OCI-LY7 (cell line): ENCODE measurements at regions of chr9 and their contacts with region 1.

Region 1: GRCh38 chr9:68949271-68950000 is 64.5 kb downstream of the PRKACG start:
- DNase-seq: peak; percentile 76
- H3K4me3 ChIP-seq: no peak overlapping the region
- H3K27ac ChIP-seq: peak overlapping the region; percentile 39
- H3K4me1 ChIP-seq: peaks cover 63% of the 10 kb centered on the region
- CTCF ChIP-seq: peak; percentile 78

Region 2: DNA sequence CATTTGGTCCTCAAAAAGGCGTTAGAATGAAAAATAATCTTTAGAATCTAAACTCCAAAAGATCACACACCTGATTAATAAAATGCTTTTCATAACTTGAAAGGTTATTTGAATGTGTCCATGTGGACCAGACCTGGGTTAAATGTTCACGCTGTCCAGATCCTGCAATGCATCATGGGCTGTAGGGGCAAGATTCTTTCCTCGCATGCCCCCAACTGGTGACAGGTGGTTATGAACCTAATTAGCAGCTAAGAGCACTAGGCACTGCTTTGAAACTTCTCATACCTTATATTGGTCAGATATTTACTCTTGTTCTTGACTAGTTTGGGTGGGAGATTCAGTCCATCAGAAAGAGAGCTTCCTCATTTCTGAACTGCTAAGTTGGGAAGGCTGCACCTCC is 263.7 kb before region 1 on chr9:
- CTCF ChIA-PET with region 1: no interaction called
- POLR2A ChIA-PET with region 1: no interaction called
- intact Hi-C with region 1: loop called (anchors 2 kb)
- DNase-seq: peak; percentile 85
- H3K4me3 ChIP-seq: no peak overlapping the region
- H3K27ac ChIP-seq: no peak overlapping the region
- H3K4me1 ChIP-seq: peaks cover 39% of the 10 kb centered on the region
- CTCF ChIP-seq: peak; percentile 91

Region 3: GRCh38 chr9:68779558-68780384 is 169.7 kb before region 1 on chr9:
- CTCF ChIA-PET with region 1: interaction called, 4 read pairs
- POLR2A ChIA-PET with region 1: no interaction called
- intact Hi-C with region 1: loop called (anchors 2 kb)
- DNase-seq: peak; percentile 96
- H3K4me3 ChIP-seq: peak overlapping the region; percentile 85
- H3K27ac ChIP-seq: peak overlapping the region; percentile 70
- H3K4me1 ChIP-seq: peaks cover 41% of the 10 kb centered on the region
- CTCF ChIP-seq: peak; percentile 78

Region 4: GRCh38 chr9:68999393-69000105 is 50.1 kb after region 1 on chr9:
- CTCF ChIA-PET with region 1: no interaction called
- POLR2A ChIA-PET with region 1: no interaction called
- intact Hi-C with region 1: loop called (anchors 2 kb)
- DNase-seq: peak; percentile 87
- H3K4me3 ChIP-seq: no peak overlapping the region
- H3K27ac ChIP-seq: no peak overlapping the region
- H3K4me1 ChIP-seq: peaks cover 13% of the 10 kb centered on the region
- CTCF ChIP-seq: peak; percentile 95